CD4-positive, alpha-beta T cell (primary cell): ENCODE measurements at regions of chr9 and their contacts with region 1.

Region 1: DNA sequence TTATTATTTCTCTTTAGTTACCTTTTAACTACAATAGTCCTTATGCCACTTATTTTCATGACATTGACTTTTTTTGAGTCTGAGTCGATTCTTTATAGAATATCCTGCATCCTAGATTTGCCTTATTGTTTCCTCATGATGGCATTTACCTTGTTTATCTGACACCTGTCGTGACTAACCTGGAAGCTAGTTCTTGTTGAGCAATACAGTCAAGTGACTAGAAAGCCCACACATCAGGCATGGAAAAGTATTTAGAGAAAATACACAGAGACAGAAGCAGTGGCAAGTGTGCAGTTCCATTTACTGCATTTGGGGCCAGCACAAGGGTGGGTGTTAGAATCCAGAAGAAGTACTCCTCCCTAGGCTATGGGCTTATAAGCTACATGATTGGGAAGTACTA is 97.8 kb downstream of the ERMP1 start:
- DNase-seq: no peak
- ATAC-seq: no peak
- H3K4me3 ChIP-seq: no peak overlapping the region
- H3K4me3 Mint-ChIP-seq: no peak overlapping the region
- H3K27ac ChIP-seq: no peak overlapping the region
- H3K27ac Mint-ChIP-seq: no peak overlapping the region
- H3K4me1 ChIP-seq: no peaks in the 10 kb centered on the region
- H3K4me1 Mint-ChIP-seq: no peaks in the 10 kb centered on the region
- H3K27me3 ChIP-seq: no peaks in the 10 kb centered on the region
- H3K27me3 Mint-ChIP-seq: no peaks in the 10 kb centered on the region
- CTCF ChIP-seq: no peak

Region 2: GRCh38 chr9:5671711-5672353 is 63.2 kb before region 1 on chr9:
- CTCF ChIA-PET with region 1: no interaction called
- POLR2A ChIA-PET with region 1: no interaction called
- intact Hi-C with region 1: loop called in 1 of 2 experiments (anchors 10 kb)
- DNase-seq: peak in 6 of 14 experiments; percentile 2 to 73 (median 48)
- ATAC-seq: peak; percentile 96
- H3K4me3 ChIP-seq: no peak overlapping the region
- H3K4me3 Mint-ChIP-seq: peak overlapping the region; percentile 26
- H3K27ac ChIP-seq: no peak overlapping the region
- H3K27ac Mint-ChIP-seq: peak overlapping the region; percentile 38
- H3K4me1 ChIP-seq: peaks cover 17% of the 10 kb centered on the region
- H3K4me1 Mint-ChIP-seq: peaks cover 47% of the 10 kb centered on the region
- H3K27me3 ChIP-seq: no peaks in the 10 kb centered on the region
- H3K27me3 Mint-ChIP-seq: no peaks in the 10 kb centered on the region
- CTCF ChIP-seq: no peak